MCF 10A (cell line): ENCODE measurements at regions of chr6 and their contacts with region 1.

Region 1: GRCh38 chr6:85544776-85545175 is 48.9 kb downstream of the SNX14 start:
- DNase-seq: no peak
- H3K4me3 Mint-ChIP-seq: no peak overlapping the region
- H3K27ac Mint-ChIP-seq: no peak overlapping the region
- H3K4me1 Mint-ChIP-seq: peaks cover 7% of the 10 kb centered on the region
- H3K27me3 Mint-ChIP-seq: no peaks in the 10 kb centered on the region
- CTCF ChIP-seq: no peak

Region 2: DNA sequence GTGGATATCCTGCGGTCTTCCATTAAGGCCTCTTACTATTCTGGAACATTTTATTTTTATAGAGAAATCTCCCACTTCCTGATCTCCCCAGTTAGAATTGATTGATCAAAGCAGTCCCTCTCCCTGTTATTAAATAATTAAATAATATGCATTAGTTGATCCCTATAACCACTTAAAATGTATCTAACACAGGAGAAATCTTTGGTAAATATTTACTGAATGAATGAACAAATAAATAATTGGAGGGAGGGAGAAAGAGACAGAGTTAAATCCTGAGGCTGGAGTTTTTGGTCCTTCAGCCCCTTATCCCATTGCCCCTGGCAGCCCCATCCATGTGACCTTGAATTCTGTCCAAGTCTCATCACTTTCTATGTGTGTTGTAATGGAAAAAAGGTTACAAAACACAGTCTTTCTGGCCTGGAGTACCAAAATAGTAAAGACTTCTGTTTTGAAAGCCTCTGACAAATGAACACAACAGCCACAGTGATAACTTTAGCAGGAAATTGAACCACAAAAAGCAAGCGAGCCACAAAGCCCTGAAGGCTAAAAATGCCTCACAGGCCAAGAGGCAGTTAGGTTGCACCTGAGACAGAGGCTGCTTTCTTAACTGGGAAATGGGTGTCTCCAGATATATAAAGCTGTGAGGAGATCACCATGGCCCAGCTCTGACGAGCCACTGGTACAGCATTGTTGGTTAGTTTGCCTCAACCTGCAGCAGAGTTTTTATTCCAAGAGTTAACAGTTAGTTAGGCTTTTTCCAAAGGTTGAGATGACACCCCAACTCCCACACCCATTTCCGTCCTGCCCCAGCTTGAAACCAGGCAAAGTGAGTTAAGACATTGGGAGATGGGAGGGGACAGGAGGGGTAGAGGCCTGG is 83.6 kb before region 1 on chr6:
- CTCF ChIA-PET with region 1: no interaction called
- POLR2A ChIA-PET with region 1: no interaction called
- intact Hi-C with region 1: no loop called
- DNase-seq: peak; percentile 83
- H3K4me3 Mint-ChIP-seq: no peak overlapping the region
- H3K27ac Mint-ChIP-seq: peak overlapping the region; percentile 80
- H3K4me1 Mint-ChIP-seq: peaks cover 91% of the 10 kb centered on the region
- H3K27me3 Mint-ChIP-seq: no peaks in the 10 kb centered on the region
- CTCF ChIP-seq: no peak

Region 3: GRCh38 chr6:85516168-85516567 is 28.6 kb before region 1 on chr6:
- CTCF ChIA-PET with region 1: no interaction called
- POLR2A ChIA-PET with region 1: interaction called, 3 read pairs
- intact Hi-C with region 1: loop called (anchors 1 kb)
- DNase-seq: peak; percentile 35
- H3K4me3 Mint-ChIP-seq: no peak overlapping the region
- H3K27ac Mint-ChIP-seq: no peak overlapping the region
- H3K4me1 Mint-ChIP-seq: peaks cover 6% of the 10 kb centered on the region
- H3K27me3 Mint-ChIP-seq: no peaks in the 10 kb centered on the region
- CTCF ChIP-seq: no peak

Region 4: GRCh38 chr6:86331265-86331840 is 786.6 kb after region 1 on chr6:
- CTCF ChIA-PET with region 1: no interaction called
- POLR2A ChIA-PET with region 1: no interaction called
- intact Hi-C with region 1: no loop called
- DNase-seq: no peak
- H3K4me3 Mint-ChIP-seq: no peak overlapping the region
- H3K27ac Mint-ChIP-seq: no peak overlapping the region
- H3K4me1 Mint-ChIP-seq: no peaks in the 10 kb centered on the region
- H3K27me3 Mint-ChIP-seq: no peaks in the 10 kb centered on the region
- CTCF ChIP-seq: no peak